AG04450 (cell line): ENCODE measurements at regions of chr3 and their contacts with region 1.

Region 1: DNA sequence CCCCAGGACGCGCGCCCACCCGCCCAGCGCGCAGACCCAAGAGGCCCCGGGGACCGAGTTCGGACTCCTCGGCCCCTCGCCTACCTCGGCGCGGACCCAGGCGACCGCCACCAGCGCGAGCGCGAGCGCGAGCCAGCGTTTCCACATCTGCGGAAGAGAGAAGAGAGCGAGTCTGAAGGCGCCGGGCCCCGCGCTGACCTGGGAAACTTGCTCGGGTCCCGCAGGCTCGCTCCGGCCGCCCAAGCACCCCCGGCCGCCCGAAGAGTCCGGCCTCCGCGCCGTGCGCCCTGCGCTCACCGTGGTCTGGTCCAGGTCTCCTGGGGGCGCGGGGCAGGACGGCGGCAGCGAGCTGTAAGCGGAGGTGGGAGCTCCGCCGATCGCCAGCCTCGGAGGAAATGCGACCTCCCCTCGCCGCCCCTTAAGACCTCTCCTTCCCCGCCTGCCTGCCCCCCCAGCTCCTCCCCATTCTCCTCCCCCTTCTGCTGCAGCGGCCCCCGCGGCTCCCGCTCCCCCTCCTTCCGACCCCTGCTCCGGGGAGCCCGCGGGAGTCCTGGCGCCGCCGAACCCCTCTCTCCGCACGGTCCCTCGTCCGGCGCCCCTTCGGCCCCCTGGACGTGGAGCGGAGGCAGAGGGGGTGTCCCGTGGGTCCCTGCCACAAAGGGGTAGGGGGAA is at the start of gene FSTL1:
- DNase-seq: no peak
- H3K4me3 ChIP-seq: peak within 1 kb of the TSS; percentile 84
- H3K27ac ChIP-seq: peak within 1 kb of the TSS; percentile 95
- H3K27me3 ChIP-seq: no peaks in the 10 kb centered on the region
- CTCF ChIP-seq: no peak
- polyA plus RNA-seq, gene FSTL1: 1,126 and 1,300 TPM in 2 replicates

Region 2: DNA sequence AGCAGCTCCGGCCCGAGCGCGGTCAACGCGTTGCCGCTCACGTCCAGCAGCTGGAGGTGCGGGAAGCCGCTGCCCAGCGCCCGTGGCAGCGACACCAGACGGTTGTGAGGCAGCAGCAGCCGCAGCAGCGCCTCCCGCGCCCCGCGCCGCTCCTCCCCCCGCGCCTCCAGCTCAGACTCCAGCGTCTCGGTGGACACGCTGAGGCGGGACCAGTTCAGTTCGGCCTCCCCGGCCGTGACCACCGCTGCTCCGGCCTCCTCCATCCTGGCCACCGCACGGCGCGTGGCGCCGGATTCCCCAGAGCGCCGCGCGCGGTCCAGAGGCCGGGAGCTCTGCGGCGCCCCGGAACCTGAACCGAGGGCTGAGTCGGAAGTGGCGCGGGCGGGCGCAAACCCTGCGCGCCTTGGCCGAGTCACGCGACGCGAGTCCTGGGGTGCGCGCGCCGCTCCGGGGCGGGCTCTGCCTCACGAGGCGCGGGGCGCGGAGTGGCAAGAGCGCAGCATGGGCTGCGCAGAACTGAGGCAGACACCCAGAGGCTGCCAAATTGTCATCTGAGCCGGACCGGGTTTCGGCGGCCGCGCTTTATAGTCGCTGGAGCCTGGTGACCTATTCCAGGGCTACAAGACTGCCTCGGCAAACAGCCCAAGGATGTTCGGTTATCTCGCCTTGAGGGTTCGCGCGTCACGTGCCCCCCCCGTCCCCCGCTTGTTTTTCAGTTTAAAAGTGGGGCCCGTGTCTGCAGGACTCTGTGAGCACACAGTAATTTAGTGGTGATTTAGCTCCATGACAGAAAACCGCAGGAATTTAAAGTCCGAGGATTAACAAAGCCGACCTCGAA is 101.5 kb before region 1 on chr3 and contains the start of gene LRRC58:
- CTCF ChIA-PET with region 1: no interaction called
- POLR2A ChIA-PET with region 1: interaction called, 16 read pairs
- DNase-seq: peak; percentile 74
- H3K4me3 ChIP-seq: peak within 1 kb of the TSS; percentile 84
- H3K27ac ChIP-seq: peak within 1 kb of the TSS; percentile 91
- H3K27me3 ChIP-seq: no peaks in the 10 kb centered on the region
- CTCF ChIP-seq: peak; percentile 33; the same call in 1 of the 2 replicates
- polyA plus RNA-seq, gene LRRC58: 9.9 and 15.0 TPM in 2 replicates

Region 3: DNA sequence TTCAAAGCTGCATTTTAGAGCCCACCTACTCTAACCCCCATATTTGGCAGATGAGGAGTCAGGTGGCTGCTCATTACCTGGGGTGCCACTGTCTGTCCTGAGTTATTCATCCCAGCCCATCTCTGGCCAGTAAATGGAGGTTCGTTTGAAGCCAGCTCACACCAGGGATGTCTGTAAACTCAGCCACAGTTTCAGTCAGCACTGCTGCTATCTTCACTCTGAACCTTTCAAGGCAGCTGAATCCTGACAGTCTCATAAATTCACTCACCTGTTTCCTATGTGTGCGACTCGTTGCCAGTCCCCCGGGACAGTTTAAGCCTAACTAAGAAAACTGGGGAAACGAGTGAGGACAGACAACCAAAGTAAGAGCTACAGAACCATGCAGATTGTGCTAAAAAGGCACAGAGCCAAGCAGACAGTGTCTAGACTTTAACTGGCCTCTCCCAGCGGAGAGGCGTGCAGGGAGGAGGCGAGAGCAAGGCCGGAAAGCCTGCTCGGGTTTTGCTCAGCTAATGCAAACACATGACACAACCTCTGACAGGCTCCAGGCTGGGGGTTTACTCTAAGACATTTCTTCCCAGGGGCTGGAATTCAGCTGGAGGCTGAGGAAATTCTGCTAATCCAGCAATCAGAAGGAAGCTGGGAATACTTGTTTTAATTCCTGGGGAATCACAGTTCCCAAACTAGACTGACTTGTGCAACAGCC is 11.9 kb before region 1 on chr3:
- CTCF ChIA-PET with region 1: interaction called, 17 read pairs
- POLR2A ChIA-PET with region 1: interaction called, 32 read pairs
- DNase-seq: peak; percentile 71
- H3K4me3 ChIP-seq: no peak overlapping the region; the same call in 1 of the 2 replicates
- H3K27ac ChIP-seq: peak overlapping the region; percentile 82
- H3K27me3 ChIP-seq: no peaks in the 10 kb centered on the region
- CTCF ChIP-seq: no peak

Region 4: GRCh38 chr3:120460862-120461261 is 10.1 kb after region 1 on chr3:
- CTCF ChIA-PET with region 1: no interaction called
- POLR2A ChIA-PET with region 1: interaction called, 10 read pairs
- DNase-seq: no peak
- H3K4me3 ChIP-seq: no peak overlapping the region
- H3K27ac ChIP-seq: no peak overlapping the region
- H3K27me3 ChIP-seq: no peaks in the 10 kb centered on the region
- CTCF ChIP-seq: no peak

Region 5: GRCh38 chr3:120469447-120469846 is 18.7 kb after region 1 on chr3:
- CTCF ChIA-PET with region 1: no interaction called
- POLR2A ChIA-PET with region 1: interaction called, 25 read pairs
- DNase-seq: no peak
- H3K4me3 ChIP-seq: no peak overlapping the region
- H3K27ac ChIP-seq: no peak overlapping the region
- H3K27me3 ChIP-seq: no peaks in the 10 kb centered on the region
- CTCF ChIP-seq: no peak

Region 6: DNA sequence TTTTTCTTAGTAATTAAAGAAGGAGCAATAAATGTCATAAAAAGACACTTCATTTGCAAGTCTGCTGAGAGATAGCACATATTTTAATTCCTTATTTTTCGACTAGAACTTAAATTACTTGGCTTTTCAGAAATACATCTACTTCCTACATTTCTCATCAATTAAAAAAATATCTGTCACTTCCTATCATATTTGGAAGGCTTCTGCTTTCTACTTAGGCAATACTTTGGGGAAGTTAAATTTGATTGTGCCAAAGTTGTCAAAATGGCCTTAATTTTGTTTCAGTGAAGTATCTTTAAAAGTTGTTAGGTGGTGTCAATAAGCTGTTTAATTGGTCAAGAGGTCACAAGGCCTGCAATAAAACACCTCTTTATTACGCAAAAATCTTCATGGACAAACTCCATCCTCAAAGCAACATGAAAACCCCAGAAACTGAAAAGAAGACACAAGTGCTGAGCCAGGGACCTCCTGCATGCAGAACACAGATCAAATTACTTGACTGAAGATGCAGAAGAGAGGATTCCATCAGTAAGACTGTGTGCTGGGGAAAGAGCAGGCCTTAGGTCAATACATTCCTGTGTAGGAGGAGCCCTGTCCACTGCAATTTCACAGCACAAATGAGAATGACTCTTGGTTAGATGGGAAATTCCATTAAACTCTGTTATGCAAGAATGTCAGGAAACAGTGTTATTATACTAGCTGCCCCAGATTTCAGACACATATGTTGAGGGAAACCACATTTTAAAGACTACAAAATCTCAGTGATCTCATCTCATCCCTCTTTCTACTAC is 48.0 kb after region 1 on chr3:
- CTCF ChIA-PET with region 1: interaction called, 3 read pairs
- POLR2A ChIA-PET with region 1: interaction called, 18 read pairs
- DNase-seq: peak; percentile 96
- H3K4me3 ChIP-seq: no peak overlapping the region
- H3K27ac ChIP-seq: peak overlapping the region; percentile 0
- H3K27me3 ChIP-seq: no peaks in the 10 kb centered on the region
- CTCF ChIP-seq: no peak